Right ventricle myocardium inferior (tissue), 1 donor: ENCODE measurements at regions of chr17 and their contacts with region 1.

Region 1: DNA sequence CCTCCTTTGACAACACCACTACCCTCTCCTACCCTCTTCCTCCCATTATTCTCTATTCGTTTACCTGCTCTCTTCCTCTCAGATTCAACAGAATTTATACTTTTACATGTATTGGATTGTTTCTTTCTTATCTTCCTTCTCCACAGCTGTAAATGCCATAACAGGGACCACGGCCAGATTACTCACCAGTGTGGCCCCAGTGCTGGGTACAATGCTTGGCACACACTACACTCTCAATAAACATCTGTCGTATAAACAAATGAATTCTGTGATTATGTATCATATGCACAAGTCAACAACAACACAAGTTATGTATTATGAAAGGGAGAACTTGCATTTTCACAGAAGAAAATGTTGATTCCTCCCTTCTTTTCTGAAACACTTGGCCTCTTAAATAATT is 20.0 kb downstream of the AARSD1 start:
- DNase-seq: no peak
- ATAC-seq: no peak

Region 2: GRCh38 chr17:42720996-42721583 is 223.1 kb before region 1 on chr17:
- intact Hi-C with region 1: loop called (anchors 10 kb)
- DNase-seq: no peak
- ATAC-seq: peak; percentile 56